ENCODE measurements at regions of chr17 and their contacts with region 1.

Region 1: GRCh38 chr17:82751571-82752370 is at the start of gene TBCD:
- DNase-seq: peak; percentile 74 to 93 (median 84)
- ATAC-seq: peak; percentile 82
- H3K4me3 ChIP-seq: peak within 1 kb of the TSS; percentile 68 to 90
- H3K4me3 Mint-ChIP-seq: peak within 1 kb of the TSS; percentile 82
- H3K27ac ChIP-seq: peak within 1 kb of the TSS; percentile 25 to 61
- H3K27ac Mint-ChIP-seq: peak within 1 kb of the TSS; percentile 41
- H3K4me1 ChIP-seq: peaks cover 17% of the 10 kb centered on the region
- H3K4me1 Mint-ChIP-seq: peaks cover 28% of the 10 kb centered on the region
- H3K27me3 ChIP-seq: no peaks in the 10 kb centered on the region
- H3K27me3 Mint-ChIP-seq: no peaks in the 10 kb centered on the region
- CTCF ChIP-seq: no peak
- total RNA-seq, gene TBCD: 78.3 to 91.2 TPM

Region 2: GRCh38 chr17:82716203-82717010 is 35.4 kb before region 1 on chr17 and contains the start of gene FN3KRP:
- CTCF ChIA-PET with region 1: interaction called, 3 read pairs
- POLR2A ChIA-PET with region 1: no interaction called
- intact Hi-C with region 1: loop called (anchors 1 kb)
- DNase-seq: peak; percentile 68 to 98 (median 92)
- ATAC-seq: peak; percentile 92
- H3K4me3 ChIP-seq: peak within 1 kb of the TSS; percentile 67 to 75
- H3K4me3 Mint-ChIP-seq: peak within 1 kb of the TSS; percentile 98
- H3K27ac ChIP-seq: peak within 1 kb of the TSS; percentile 57 to 65
- H3K27ac Mint-ChIP-seq: peak within 1 kb of the TSS; percentile 93
- H3K4me1 ChIP-seq: peaks cover 18% of the 10 kb centered on the region
- H3K4me1 Mint-ChIP-seq: peaks cover 22% of the 10 kb centered on the region
- H3K27me3 ChIP-seq: no peaks in the 10 kb centered on the region
- H3K27me3 Mint-ChIP-seq: no peaks in the 10 kb centered on the region
- CTCF ChIP-seq: no peak
- total RNA-seq, gene FN3KRP: 29.3 to 30.9 TPM

Region 3: DNA sequence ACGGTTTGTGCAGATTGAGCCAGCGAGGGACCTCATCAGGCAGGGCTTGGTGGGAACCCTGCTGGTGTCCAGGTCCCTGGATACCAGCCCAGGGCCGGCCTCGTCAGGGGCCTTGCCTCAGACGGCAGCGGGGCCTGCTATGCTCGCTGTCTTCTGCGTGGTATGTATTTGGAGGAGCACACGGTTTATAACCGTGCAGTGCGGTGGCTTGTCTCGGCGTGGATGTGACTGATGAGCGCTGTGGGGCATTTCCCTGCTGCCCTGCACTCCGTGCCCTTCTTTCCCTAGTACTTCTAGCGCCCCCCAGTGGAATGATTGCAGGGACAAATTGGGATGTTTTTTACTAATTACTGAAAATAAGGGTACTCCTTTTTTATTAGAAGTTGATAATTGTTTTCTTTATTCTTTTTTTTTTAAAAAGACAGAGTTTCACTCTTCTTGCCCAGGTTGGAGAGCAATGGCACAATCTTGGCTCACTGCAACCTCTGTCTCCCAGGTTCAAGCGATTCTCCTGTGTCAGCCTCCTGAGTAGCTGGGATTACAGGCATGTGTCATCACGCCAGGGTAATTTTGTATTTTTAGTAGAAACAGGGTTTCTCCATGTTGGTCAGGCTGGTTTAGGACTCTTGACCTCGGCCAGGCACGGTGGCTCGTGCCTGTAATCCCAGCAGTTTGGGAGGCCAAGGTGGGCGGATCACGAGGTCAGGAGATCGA is 15.4 kb after region 1 on chr17:
- CTCF ChIA-PET with region 1: no interaction called
- POLR2A ChIA-PET with region 1: no interaction called
- intact Hi-C with region 1: no loop called
- DNase-seq: peak in 5 of 9 experiments; percentile 39 to 54 (median 46)
- ATAC-seq: no peak
- H3K4me3 ChIP-seq: no peak overlapping the region
- H3K4me3 Mint-ChIP-seq: no peak overlapping the region
- H3K27ac ChIP-seq: no peak overlapping the region
- H3K27ac Mint-ChIP-seq: no peak overlapping the region
- H3K4me1 ChIP-seq: no peaks in the 10 kb centered on the region
- H3K4me1 Mint-ChIP-seq: peaks cover 17% of the 10 kb centered on the region
- H3K27me3 ChIP-seq: no peaks in the 10 kb centered on the region
- H3K27me3 Mint-ChIP-seq: no peaks in the 10 kb centered on the region
- CTCF ChIP-seq: peak; percentile 26

Region 4: GRCh38 chr17:83051395-83052233 is 299.8 kb after region 1 on chr17:
- CTCF ChIA-PET with region 1: no interaction called
- POLR2A ChIA-PET with region 1: no interaction called
- intact Hi-C with region 1: loop called (anchors 1 to 10 kb)
- DNase-seq: peak; percentile 95 to 99 (median 99)
- ATAC-seq: peak; percentile 85
- H3K4me3 ChIP-seq: peak overlapping the region; percentile 49 to 68
- H3K4me3 Mint-ChIP-seq: peak overlapping the region; percentile 86
- H3K27ac ChIP-seq: peak overlapping the region; percentile 75 to 87
- H3K27ac Mint-ChIP-seq: peak overlapping the region; percentile 94
- H3K4me1 ChIP-seq: peaks cover 40% of the 10 kb centered on the region
- H3K4me1 Mint-ChIP-seq: peaks cover 40% of the 10 kb centered on the region
- H3K27me3 ChIP-seq: no peaks in the 10 kb centered on the region
- H3K27me3 Mint-ChIP-seq: no peaks in the 10 kb centered on the region
- CTCF ChIP-seq: no peak